ENCODE measurements at regions of chr13 and their contacts with region 1.

Region 1: DNA sequence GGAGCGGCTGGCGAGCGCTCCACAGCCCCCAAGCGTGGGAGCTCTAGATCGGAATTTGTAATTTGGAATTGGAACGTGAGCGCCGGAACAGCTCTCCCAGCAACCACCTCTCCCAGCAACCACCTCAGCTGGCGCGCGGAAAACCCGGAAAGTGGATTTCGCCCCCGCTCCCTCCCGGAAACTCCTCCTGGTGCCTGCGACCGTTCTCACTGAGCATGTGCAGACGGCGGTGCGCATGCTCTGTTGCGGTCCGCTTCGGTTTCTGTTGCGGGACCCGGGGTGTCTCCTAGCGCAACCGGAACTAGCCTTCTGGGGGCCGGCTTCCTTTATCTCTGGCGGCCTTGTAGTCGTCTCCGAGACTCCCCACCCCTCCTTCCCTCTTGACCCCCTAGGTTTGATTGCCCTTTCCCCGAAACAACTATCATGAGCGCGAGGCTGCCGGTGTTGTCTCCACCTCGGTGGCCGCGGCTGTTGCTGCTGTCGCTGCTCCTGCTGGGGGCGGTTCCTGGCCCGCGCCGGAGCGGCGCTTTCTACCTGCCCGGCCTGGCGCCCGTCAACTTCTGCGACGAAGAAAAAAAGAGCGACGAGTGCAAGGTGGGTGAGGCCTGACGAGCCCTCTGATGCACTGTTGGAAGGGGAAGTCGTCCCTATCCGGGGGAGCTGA is at the start of gene TM9SF2:
- DNase-seq: peak; percentile 98
- H3K4me3 Mint-ChIP-seq: peak within 1 kb of the TSS; percentile 92
- H3K27ac Mint-ChIP-seq: peak within 1 kb of the TSS; percentile 92
- H3K4me1 Mint-ChIP-seq: peaks cover 70% of the 10 kb centered on the region
- H3K27me3 Mint-ChIP-seq: no peaks in the 10 kb centered on the region
- total RNA-seq, gene TM9SF2: 35.2 to 36.4 TPM

Region 2: GRCh38 chr13:97975848-97976609 is 1525.3 kb before region 1 on chr13:
- CTCF ChIA-PET with region 1: no interaction called
- intact Hi-C with region 1: loop called (anchors 1 kb)
- DNase-seq: peak; percentile 89
- H3K4me3 Mint-ChIP-seq: peak overlapping the region; percentile 92
- H3K27ac Mint-ChIP-seq: peak overlapping the region; percentile 97
- H3K4me1 Mint-ChIP-seq: peaks cover 28% of the 10 kb centered on the region
- H3K27me3 Mint-ChIP-seq: no peaks in the 10 kb centered on the region

Region 3: DNA sequence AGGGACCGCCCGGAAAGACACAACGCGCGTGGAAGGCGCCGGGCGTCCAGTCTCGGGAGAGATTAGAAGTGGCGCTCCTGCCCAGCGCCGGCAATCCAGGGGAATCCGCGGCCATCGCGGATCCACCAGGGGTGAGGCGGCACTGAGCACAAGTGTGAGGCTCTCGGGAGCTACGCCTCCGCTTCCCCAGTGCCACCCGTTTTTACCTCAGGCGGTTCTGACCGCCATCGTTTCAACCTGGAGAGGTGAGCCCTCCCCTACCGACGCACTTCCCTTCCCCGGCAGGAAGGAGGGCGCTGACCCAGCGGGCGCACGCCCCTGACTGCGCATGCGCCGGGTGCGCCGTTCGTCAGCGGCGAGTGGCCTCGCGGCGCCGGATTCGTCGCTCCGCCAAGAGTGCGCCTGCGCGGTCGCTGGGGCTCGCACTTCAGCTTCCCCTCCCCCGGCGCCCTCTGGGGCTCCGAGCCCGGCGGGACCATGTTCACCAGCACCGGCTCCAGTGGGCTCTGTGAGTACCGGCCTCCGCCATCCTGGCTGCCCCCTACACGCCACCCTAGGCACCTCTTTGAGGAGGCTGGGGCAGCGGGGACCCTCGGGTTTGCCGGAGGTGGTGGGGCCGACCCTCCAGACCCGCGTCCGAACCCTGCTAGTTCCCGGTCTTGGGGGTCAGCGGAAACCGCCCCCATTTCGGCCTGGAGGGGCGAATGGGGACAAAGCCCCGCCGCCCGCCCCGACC is 300.7 kb before region 1 on chr13 and contains the start of gene UBAC2:
- CTCF ChIA-PET with region 1: no interaction called
- intact Hi-C with region 1: loop called (anchors 1 kb)
- DNase-seq: peak; percentile 95
- H3K4me3 Mint-ChIP-seq: peak within 1 kb of the TSS; percentile 91
- H3K27ac Mint-ChIP-seq: peak within 1 kb of the TSS; percentile 90
- H3K4me1 Mint-ChIP-seq: peaks cover 60% of the 10 kb centered on the region
- H3K27me3 Mint-ChIP-seq: no peaks in the 10 kb centered on the region
- total RNA-seq, gene UBAC2: 43.4 to 44.9 TPM

Region 4: GRCh38 chr13:99356158-99357091 is 144.9 kb before region 1 on chr13:
- CTCF ChIA-PET with region 1: no interaction called
- intact Hi-C with region 1: loop called (anchors 2 kb)
- DNase-seq: peak; percentile 70
- H3K4me3 Mint-ChIP-seq: peak overlapping the region; percentile 58
- H3K27ac Mint-ChIP-seq: peak overlapping the region; percentile 93
- H3K4me1 Mint-ChIP-seq: peaks cover 97% of the 10 kb centered on the region
- H3K27me3 Mint-ChIP-seq: no peaks in the 10 kb centered on the region

Region 5: GRCh38 chr13:99464441-99464949 is 36.8 kb before region 1 on chr13:
- CTCF ChIA-PET with region 1: interaction called, 4 read pairs
- intact Hi-C with region 1: loop called (anchors 1 kb)
- DNase-seq: peak; percentile 22
- H3K4me3 Mint-ChIP-seq: peak overlapping the region; percentile 28
- H3K27ac Mint-ChIP-seq: peak overlapping the region; percentile 80
- H3K4me1 Mint-ChIP-seq: peaks cover 30% of the 10 kb centered on the region
- H3K27me3 Mint-ChIP-seq: no peaks in the 10 kb centered on the region

Region 6: GRCh38 chr13:99677116-99677951 is 176.0 kb after region 1 on chr13:
- CTCF ChIA-PET with region 1: no interaction called
- intact Hi-C with region 1: no loop called
- DNase-seq: no peak
- H3K4me3 Mint-ChIP-seq: no peak overlapping the region
- H3K27ac Mint-ChIP-seq: no peak overlapping the region
- H3K4me1 Mint-ChIP-seq: peaks cover 4% of the 10 kb centered on the region
- H3K27me3 Mint-ChIP-seq: no peaks in the 10 kb centered on the region

Region 7: GRCh38 chr13:99721606-99722337 is 220.5 kb after region 1 on chr13:
- CTCF ChIA-PET with region 1: no interaction called
- intact Hi-C with region 1: no loop called
- DNase-seq: no peak
- H3K4me3 Mint-ChIP-seq: no peak overlapping the region
- H3K27ac Mint-ChIP-seq: no peak overlapping the region
- H3K4me1 Mint-ChIP-seq: no peaks in the 10 kb centered on the region
- H3K27me3 Mint-ChIP-seq: no peaks in the 10 kb centered on the region

Region 8: DNA sequence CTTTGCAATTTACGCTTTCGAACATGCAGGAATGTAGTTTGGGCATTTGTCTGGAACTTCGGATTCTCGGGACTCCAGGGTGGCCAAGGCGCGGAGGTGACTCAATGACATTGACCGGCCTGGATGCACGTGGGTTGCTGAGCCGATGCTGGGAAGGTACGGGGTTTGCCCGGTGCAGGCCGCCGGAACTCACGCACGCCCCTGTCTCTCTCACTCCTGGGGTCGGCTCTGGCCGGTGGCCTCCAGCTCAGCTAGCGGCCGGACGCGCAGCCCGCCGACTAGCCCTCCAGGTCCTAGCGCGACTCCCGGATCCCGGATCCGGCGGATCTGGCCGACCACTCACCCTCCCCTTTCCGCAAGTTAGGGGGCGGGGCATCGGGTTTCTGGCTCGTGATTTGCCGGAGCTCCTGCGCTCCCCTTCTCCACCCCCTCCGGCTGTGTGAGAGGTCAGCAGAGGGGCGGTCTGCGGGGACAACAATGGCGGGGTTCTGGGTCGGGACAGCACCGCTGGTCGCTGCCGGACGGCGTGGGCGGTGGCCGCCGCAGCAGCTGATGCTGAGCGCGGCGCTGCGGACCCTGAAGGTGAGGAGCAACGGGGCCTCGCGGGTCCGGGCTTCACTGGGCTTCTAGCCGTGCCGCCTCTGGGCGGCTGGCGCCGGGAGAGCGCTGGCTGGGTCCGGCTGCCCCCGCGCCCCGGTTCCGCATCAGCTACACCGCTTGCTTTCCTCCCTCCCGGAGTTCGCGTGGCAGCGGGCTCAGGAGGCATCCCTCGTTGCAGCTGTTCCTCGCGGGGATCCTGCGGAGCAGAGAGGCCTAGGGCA is 587.5 kb after region 1 on chr13 and contains the start of gene PCCA:
- CTCF ChIA-PET with region 1: no interaction called
- intact Hi-C with region 1: loop called (anchors 5 kb)
- DNase-seq: peak; percentile 86
- H3K4me3 Mint-ChIP-seq: peak within 1 kb of the TSS; percentile 93
- H3K27ac Mint-ChIP-seq: peak within 1 kb of the TSS; percentile 37
- H3K4me1 Mint-ChIP-seq: peaks cover 19% of the 10 kb centered on the region
- H3K27me3 Mint-ChIP-seq: no peaks in the 10 kb centered on the region
- total RNA-seq, gene PCCA: 6.8 to 8.1 TPM